Heart right ventricle (tissue), 16 donors: ENCODE measurements at regions of chr15 and their contacts with region 1.

Region 1: DNA sequence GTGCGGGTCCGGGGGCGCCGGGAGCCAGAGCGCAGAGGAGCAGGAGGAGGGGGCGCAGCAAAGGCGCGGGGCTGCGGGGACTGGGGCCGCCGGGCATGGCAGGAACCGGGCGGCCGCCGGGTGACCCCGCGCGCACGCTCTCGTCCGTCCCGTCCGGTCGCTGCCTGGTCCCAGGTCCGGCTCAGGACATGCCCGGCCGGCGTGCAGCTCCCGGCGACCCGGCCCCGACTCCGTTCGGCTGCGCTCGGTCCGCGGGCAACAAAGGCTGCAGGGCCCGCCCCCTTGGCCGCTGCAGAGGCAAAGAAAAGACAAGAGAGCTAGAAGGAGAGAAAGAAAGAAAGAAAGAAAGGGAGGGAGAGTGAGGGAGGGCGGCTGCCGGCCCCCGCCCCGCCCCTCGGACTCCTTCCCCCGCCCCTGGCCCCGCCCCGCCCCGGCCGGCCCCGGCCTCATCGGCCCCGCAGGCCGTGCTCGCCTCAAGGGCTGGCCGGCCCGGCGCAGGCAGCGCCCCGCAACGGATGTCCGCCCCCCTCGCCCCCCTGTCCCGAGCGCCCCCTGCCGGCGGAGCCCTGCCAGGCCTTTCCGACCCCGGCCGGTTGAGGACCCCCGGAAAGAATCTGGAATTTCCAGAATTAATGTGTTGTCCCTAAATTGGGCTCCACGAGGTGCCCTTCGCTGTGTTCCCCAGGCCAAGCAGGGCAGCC is at the start of gene ADAMTS7:
- DNase-seq: peak; percentile 73 to 87
- ATAC-seq: peak; percentile 83 to 92 (median 89)
- H3K4me3 ChIP-seq: peak within 1 kb of the TSS; percentile 68 to 90 (median 80)
- H3K27ac ChIP-seq: peak within 1 kb of the TSS; percentile 29 to 91 (median 87)
- H3K4me1 ChIP-seq: peaks cover 6 to 34% (median 22%) of the 10 kb centered on the region in 9 donors
- H3K27me3 ChIP-seq: peaks cover 0 to 40% (median 0%) of the 10 kb centered on the region in 7 donors
- CTCF ChIP-seq: peak; percentile 58 to 84 (median 75)
- total RNA-seq, gene ADAMTS7: 8.8 to 41.2 (median 17.9) TPM

Region 2: DNA sequence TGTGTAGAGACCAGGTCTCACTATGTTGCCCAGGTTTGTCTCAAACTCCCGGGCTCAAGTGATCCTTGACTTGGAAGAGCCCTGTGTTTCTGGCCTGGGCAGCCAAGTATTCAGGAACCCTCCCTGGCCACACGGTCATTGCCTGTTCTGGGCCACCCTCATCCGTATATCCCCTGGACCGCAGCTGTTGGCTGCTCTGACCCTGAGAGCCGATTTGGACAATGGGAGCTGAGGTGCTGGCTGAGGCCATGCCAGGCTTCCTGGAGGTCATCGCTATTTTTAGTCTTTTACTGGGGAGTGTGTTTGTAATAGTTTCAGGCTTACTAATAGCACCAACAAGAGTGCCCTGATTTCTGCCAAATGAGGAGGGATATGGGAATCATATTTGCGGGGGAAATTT is 60.7 kb before region 1 on chr15:
- intact Hi-C with region 1: loop called in 4 of 10 experiments (anchors 5 kb)
- DNase-seq: no peak
- ATAC-seq: peak; percentile 50 to 73 (median 62)
- H3K4me3 ChIP-seq: peak overlapping the region in 6 of 10 donors; percentile 14 to 38 (median 26)
- H3K27ac ChIP-seq: peak overlapping the region in 8 of 10 donors; percentile 38 to 73 (median 63)
- H3K4me1 ChIP-seq: peaks cover 0 to 49% (median 13%) of the 10 kb centered on the region in 9 donors
- H3K27me3 ChIP-seq: no peaks in the 10 kb centered on the region
- CTCF ChIP-seq: no peak

Region 3: GRCh38 chr15:78761891-78762385 is 49.3 kb before region 1 on chr15:
- intact Hi-C with region 1: loop called in 5 of 10 experiments (anchors 2 to 10 kb)
- DNase-seq: peak in 1 of 2 donors; percentile 14
- ATAC-seq: peak in 2 of 8 donors; percentile 0
- H3K4me3 ChIP-seq: no peak overlapping the region
- H3K27ac ChIP-seq: peak overlapping the region in 9 of 10 donors; percentile 43 to 82 (median 61)
- H3K4me1 ChIP-seq: peaks cover 24 to 69% (median 49%) of the 10 kb centered on the region in 9 donors
- H3K27me3 ChIP-seq: no peaks in the 10 kb centered on the region
- CTCF ChIP-seq: no peak

Region 4: DNA sequence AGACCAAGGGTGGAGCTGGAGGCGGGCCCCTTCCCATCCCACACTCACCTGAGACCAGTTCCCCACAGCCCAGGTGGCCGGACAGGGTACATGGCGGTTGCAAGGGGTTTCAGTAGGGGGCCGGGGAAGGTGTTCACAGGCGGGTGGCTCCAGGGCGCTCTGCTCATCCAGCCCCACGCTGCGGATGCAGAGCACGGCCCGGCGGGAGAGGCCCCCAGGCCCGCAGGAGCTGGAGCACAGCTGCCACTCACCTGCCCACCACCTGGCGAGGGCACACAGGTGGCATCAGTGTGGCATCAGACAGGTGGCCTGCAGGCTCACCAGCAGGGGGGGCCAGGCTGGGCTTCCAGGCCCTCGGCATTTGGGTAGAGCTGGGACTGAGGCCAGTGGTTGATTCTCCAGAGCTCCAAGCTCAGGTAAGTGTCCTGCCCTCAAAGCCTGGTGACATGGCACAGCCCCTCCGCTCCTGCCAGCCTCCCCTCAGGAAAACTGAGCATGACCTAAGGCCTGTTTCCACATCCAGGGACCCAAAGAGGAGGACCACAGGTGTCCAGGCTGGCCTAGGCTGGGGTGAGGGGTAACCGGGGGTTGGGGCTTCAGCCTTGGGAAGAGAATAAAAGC is 43.8 kb before region 1 on chr15:
- intact Hi-C with region 1: loop called in 2 of 10 experiments (anchors 5 to 10 kb)
- DNase-seq: peak in 1 of 2 donors; percentile 10
- ATAC-seq: no peak
- H3K4me3 ChIP-seq: no peak overlapping the region
- H3K27ac ChIP-seq: no peak overlapping the region
- H3K4me1 ChIP-seq: peaks cover 0 to 17% (median 8%) of the 10 kb centered on the region in 9 donors
- H3K27me3 ChIP-seq: no peaks in the 10 kb centered on the region
- CTCF ChIP-seq: peak in 1 of 9 donors; percentile 17

Region 5: GRCh38 chr15:78859971-78860732 is 48.9 kb after region 1 on chr15:
- intact Hi-C with region 1: loop called in 1 of 10 experiments (anchors 10 kb)
- DNase-seq: peak; percentile 55 to 74
- ATAC-seq: peak; percentile 66 to 95 (median 82)
- H3K4me3 ChIP-seq: peak overlapping the region in 9 of 10 donors; percentile 21 to 59 (median 49)
- H3K27ac ChIP-seq: peak overlapping the region in 7 of 10 donors; percentile 23 to 73 (median 38)
- H3K4me1 ChIP-seq: peaks cover 0 to 10% (median 0%) of the 10 kb centered on the region in 9 donors
- H3K27me3 ChIP-seq: no peaks in the 10 kb centered on the region
- CTCF ChIP-seq: peak; percentile 29 to 73 (median 59)

Region 6: GRCh38 chr15:78872972-78873792 is 61.9 kb after region 1 on chr15:
- intact Hi-C with region 1: loop called in 4 of 10 experiments (anchors 2 to 10 kb)
- DNase-seq: peak; percentile 81 to 86
- ATAC-seq: peak; percentile 72 to 84 (median 78)
- H3K4me3 ChIP-seq: peak overlapping the region; percentile 57 to 100 (median 93)
- H3K27ac ChIP-seq: peak overlapping the region; percentile 92 to 100 (median 100)
- H3K4me1 ChIP-seq: peaks cover 6 to 48% (median 41%) of the 10 kb centered on the region in 9 donors
- H3K27me3 ChIP-seq: no peaks in the 10 kb centered on the region
- CTCF ChIP-seq: peak in 8 of 9 donors; percentile 13 to 58 (median 40)